ENCODE measurements at regions of chr18 and their contacts with region 1.

Region 1: DNA sequence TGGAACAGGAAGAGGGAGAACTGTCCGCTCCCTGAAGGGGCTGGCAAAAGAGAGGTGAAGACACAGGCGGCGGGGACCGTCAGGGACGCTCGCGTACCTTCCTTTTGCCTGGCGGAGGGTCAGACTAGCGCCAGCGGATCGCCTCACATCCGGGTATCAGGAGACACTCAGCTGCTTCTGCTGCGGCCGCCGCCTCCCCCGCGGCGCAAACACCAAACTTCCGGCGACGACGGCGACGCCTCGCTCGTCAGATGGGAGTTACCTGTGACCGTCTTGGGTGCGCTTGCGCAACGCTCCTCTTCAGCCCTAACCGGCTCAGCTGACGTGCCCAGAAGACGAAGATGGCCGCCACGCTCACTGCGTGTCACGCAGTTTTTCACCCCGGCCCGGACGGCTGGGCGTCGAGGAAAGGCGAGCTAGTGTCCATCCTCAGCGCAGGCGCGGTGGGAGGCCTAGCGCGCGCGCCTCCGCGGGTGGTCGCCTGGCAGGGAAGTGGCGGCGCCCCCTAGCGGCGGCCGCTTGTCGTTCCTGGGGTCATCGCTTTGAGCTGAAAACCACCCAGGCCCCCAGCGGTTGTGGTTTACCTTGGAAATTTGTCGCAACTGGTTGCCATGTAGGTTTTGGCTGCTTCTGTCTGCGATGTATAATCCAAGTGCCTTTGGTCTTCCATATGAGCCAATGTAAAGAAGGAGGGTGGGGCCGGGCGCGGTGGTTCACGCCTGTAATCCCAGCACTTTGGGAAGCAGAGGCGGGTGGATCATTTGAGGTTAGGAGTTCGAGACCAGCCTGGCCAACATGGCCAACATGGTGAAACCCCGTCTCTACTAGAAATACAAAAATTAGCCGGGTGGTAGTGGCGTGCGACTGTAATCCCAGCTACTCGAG is at the start of gene ESCO1:
- DNase-seq: peak; percentile 95
- H3K4me3 ChIP-seq: peak within 1 kb of the TSS; percentile 61 to 99 (median 89)
- H3K27ac ChIP-seq: peak within 1 kb of the TSS; percentile 96
- H3K4me1 ChIP-seq: peaks cover 0 to 7% (median 2%) of the 10 kb centered on the region in 4 experiments; a peak in 2 of 7 replicates
- H3K27me3 ChIP-seq: 0 out of 7 replicates have a peak, but pooled peaks cover 0 to 2% (median 0%) of the 10 kb centered on the region in 4 experiments
- CTCF ChIP-seq: peak; percentile 82 to 95 (median 90)
- EP300 ChIP-seq: peak in 1 of 2 experiments; percentile 51; a peak in 1 of 3 replicates
- POLR2A ChIP-seq: peak in 1 of 2 experiments; percentile 88; a peak in 2 of 3 replicates
- RAD21 ChIP-seq: peak; percentile 20 to 29; a peak in 2 of 4 replicates
- total RNA-seq, gene ESCO1: 44.6 and 48.3 TPM in 2 replicates

Region 2: DNA sequence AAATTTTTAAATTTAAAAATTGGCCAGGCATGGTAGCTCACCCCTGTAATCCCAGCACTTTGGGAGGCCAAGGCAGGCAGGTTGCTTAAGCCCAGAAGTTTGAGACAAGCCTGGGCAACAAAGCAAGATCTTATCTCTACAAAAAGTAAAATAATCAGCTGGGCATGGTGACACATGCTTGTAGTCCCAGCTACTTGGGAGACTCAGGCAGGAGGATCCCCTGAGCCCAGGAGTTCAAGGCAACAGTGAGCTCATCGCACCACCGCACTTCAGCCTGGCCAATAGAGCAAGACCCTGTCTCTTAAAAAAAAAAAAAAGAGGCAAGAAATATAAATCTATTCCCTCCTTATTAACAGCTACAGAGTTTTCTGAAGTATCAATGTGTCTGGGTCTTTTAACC is 52.1 kb before region 1 on chr18:
- CTCF ChIA-PET with region 1: no interaction called
- POLR2A ChIA-PET with region 1: no interaction called
- DNase-seq: no peak
- H3K4me3 ChIP-seq: no peak overlapping the region
- H3K27ac ChIP-seq: no peak overlapping the region
- H3K4me1 ChIP-seq: no peaks in the 10 kb centered on the region
- H3K27me3 ChIP-seq: no peaks in the 10 kb centered on the region
- CTCF ChIP-seq: no peak
- EP300 ChIP-seq: no peak
- POLR2A ChIP-seq: no peak
- RAD21 ChIP-seq: no peak

Region 3: DNA sequence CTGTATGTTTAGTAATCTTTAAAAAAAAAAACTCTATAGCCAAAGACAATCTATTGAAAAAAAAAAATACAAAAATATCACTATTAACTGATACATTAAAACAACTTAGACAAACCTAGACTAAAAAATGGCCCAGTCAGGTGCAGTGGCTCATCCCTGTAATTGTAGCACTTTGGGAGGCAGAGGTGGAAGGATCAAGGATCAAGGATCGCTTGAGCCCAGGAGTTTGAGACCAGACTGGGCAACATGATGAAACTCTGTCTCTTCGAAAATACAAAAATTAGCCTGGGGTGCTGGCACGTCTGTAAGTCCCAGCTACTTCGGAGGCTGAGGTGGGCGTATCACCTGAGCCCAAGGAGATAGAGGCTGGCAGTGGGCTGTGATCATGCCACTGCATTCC is 16.4 kb before region 1 on chr18:
- CTCF ChIA-PET with region 1: interaction called, 7 read pairs
- POLR2A ChIA-PET with region 1: interaction called, 19 read pairs
- DNase-seq: no peak
- H3K4me3 ChIP-seq: no peak overlapping the region
- H3K27ac ChIP-seq: no peak overlapping the region
- H3K4me1 ChIP-seq: no peaks in the 10 kb centered on the region
- H3K27me3 ChIP-seq: no peaks in the 10 kb centered on the region
- CTCF ChIP-seq: no peak
- EP300 ChIP-seq: no peak
- POLR2A ChIP-seq: no peak
- RAD21 ChIP-seq: no peak

Region 4: DNA sequence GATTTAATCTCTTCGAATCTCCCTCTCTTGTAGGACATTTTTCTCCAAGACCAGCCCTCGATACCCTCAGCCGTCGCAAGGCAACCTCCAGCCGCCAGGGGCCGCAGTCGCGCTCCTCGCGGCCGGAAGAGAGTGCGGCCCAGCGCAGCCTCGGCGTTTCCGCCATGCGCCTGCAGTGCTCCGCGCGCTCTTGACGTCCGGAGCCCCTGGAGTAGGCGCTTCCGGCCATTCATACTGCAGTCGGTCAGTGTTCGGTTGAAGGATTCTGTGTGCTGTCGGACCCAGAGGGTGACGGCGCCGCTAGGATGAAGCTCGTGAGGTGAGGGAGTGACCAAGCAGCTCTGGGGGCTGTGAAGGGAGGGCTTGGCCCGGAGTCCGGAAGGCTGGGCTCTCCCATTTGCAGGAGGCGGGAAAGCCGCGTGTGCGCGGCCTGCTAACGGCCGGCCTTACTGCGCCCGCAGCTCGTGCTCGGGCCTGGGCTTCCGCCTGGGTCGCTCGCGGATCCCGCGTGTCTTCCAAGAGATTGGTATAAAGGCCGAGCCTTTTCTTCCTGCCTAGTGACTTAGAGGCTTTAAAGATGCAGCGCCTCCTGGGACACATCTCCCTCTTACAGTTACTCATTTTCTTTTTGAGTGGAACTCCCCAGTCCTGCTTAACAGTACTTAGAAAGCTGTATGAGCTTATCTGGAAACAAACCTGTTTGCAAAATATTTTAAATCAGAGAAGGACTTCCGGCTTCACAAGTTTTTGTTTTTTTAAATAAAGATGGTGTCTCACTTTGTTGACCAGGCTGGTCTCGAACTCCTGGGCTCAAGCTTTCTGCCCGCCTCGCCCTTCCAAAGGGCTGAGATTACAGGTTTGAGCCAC is 11.6 kb after region 1 on chr18 and contains the start of gene SNRPD1:
- CTCF ChIA-PET with region 1: interaction called, 52 read pairs
- POLR2A ChIA-PET with region 1: interaction called, 77 read pairs
- DNase-seq: peak; percentile 86 to 96
- H3K4me3 ChIP-seq: peak within 1 kb of the TSS; percentile 79 to 99 (median 93)
- H3K27ac ChIP-seq: peak within 1 kb of the TSS; percentile 89
- H3K4me1 ChIP-seq: no peaks in the 10 kb centered on the region; a peak in 1 of 7 replicates
- H3K27me3 ChIP-seq: no peaks in the 10 kb centered on the region
- CTCF ChIP-seq: peak; percentile 86 to 96 (median 95)
- EP300 ChIP-seq: 0 out of 3 replicates have a peak, but pooled peaks of 1 of the 2 experiments have one; percentile 8
- POLR2A ChIP-seq: peak; percentile 95 to 99
- RAD21 ChIP-seq: peak in 1 of 2 experiments; percentile 46; a peak in 3 of 4 replicates
- total RNA-seq, gene SNRPD1: 180 and 184 TPM in 2 replicates

Region 5: DNA sequence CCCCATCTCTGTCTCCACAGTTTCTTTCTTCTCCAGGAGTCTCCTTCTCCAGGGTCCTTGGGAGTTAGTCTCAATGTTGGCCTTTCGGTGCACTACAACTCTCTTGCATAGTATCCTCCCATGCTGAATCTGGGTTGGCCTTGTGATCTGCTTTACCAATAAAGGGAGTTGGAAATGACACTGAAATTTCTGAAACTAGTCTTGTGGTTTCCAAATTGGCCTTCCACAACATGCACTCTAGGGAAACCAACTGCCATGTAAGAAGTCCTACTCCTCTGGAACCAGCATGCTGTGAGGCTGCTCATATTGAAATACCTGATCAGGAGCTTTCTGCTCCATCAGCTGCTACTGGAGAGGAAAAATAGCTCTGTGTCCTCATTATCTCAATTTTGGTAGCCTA is 113.7 kb after region 1 on chr18:
- CTCF ChIA-PET with region 1: no interaction called
- POLR2A ChIA-PET with region 1: no interaction called
- DNase-seq: no peak
- H3K4me3 ChIP-seq: no peak overlapping the region
- H3K27ac ChIP-seq: no peak overlapping the region
- H3K4me1 ChIP-seq: no peaks in the 10 kb centered on the region
- H3K27me3 ChIP-seq: no peaks in the 10 kb centered on the region
- CTCF ChIP-seq: no peak
- EP300 ChIP-seq: no peak
- POLR2A ChIP-seq: no peak
- RAD21 ChIP-seq: no peak

Region 6: GRCh38 chr18:21740724-21741510 is 140.1 kb after region 1 on chr18 and contains the start of gene MIB1:
- CTCF ChIA-PET with region 1: interaction called, 4 read pairs
- POLR2A ChIA-PET with region 1: interaction called, 12 read pairs
- DNase-seq: peak in 1 of 2 experiments; percentile 99
- H3K4me3 ChIP-seq: peak within 1 kb of the TSS; percentile 83 to 94 (median 88)
- H3K27ac ChIP-seq: peak within 1 kb of the TSS; percentile 91
- H3K4me1 ChIP-seq: peaks cover under 1 to 6% (median 4%) of the 10 kb centered on the region in 4 experiments; a peak in 5 of 7 replicates
- H3K27me3 ChIP-seq: no peaks in the 10 kb centered on the region
- CTCF ChIP-seq: no peak
- EP300 ChIP-seq: no peak
- POLR2A ChIP-seq: peak; percentile 74 to 75
- RAD21 ChIP-seq: no peak
- total RNA-seq, gene MIB1: 57.2 and 60.3 TPM in 2 replicates